ENCODE measurements at regions of chr5 and their contacts with region 1.

Region 1: DNA sequence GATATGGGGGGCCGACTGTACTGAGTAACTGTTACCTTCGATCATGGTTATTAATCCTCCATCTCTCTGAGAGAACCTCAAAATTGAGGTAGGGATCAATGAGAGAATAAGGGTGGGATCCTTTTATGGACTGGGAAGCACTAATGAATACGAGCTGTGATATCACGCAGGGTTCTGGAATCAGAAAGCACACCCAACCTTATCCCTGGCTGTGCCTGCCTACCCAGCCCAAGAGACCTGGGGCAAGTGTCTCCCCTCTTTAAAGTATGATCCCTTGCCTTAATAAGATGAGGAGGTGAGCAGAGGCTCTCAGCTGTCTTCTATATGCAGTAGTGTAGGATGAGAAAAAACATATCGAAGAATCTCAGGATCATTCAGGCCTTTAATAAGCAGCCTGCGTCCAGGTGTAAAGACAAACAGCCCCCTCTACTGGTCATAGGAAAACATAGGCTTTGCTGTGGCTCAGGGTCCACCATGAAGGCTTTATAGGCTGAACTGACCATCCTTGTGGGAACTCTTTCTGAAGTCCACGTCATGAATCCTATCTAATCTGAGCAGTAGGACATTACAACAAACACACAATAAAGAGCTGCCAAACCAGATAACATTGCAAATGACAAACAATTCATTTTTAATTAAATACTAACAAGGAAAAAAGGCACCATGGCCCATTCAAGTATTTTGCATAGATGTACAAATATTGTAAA is 16.8 kb downstream of the NIPAL4 start:
- DNase-seq: peak in 3 of 10 donors; percentile 37 to 57 (median 45)

Region 2: GRCh38 chr5:157328277-157328912 is 148.5 kb before region 1 on chr5:
- intact Hi-C with region 1: loop called (anchors 5 kb)
- DNase-seq: peak in 8 of 10 donors; percentile 42 to 95 (median 64)

Region 3: GRCh38 chr5:157366741-157367674 is 109.8 kb before region 1 on chr5:
- intact Hi-C with region 1: loop called (anchors 2 kb)
- DNase-seq: peak in 1 of 10 donors; percentile 84

Region 4: GRCh38 chr5:157431544-157432200 is 45.2 kb before region 1 on chr5:
- intact Hi-C with region 1: loop called (anchors 1 kb)
- DNase-seq: no peak

Region 5: DNA sequence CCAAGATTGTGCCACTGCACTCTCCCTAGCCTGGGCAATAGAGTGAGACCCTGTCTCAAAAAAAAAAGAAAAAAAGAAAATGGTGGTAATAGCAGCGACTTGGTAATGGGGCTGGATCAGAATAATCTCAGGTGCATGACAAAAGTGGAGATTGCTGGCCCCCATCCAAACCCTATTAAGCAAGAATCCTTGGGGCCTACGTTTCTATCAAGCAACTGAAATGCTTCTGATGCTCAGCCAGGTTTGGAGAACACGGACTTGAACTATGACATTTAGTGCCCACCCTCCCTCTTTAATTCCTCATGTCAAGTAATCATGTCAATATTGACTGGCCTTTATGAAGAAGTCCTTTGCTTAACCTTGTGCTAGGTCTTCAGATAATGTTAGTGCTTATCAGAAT is 201.1 kb after region 1 on chr5:
- intact Hi-C with region 1: no loop called
- DNase-seq: no peak